Caco-2 (cell line): ENCODE measurements at regions of chr17 and their contacts with region 1.

Region 1: DNA sequence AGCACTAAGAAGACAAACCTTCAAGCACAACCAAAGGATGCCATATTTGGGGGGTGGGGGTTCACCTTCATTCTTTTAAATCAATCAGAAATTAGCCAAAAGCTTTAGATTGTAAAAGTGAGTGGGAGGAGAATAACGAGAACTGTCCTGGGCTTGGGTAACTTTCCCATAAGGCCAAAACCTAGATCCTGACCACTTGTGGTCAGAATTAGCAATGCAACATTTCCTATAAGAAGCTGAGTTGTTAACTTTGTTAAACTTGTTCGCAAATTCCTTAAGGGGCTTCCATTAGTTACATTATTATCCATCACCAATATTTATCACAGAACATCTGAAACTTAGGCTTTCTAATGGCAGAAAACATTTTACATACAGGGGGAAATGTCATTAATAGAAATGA is 25.1 kb downstream of the STAT5B start:
- DNase-seq: peak in 1 of 2 experiments; percentile 15
- H3K4me3 ChIP-seq: no peak overlapping the region
- H3K4me3 Mint-ChIP-seq: no peak overlapping the region
- H3K27ac Mint-ChIP-seq: no peak overlapping the region
- H3K4me1 ChIP-seq: peaks cover 18% of the 10 kb centered on the region
- H3K4me1 Mint-ChIP-seq: peaks cover 16% of the 10 kb centered on the region
- H3K27me3 ChIP-seq: no peaks in the 10 kb centered on the region
- H3K27me3 Mint-ChIP-seq: no peaks in the 10 kb centered on the region
- CTCF ChIP-seq: peak in 1 of 2 experiments; percentile 44

Region 2: GRCh38 chr17:42221937-42222745 is 29.0 kb before region 1 on chr17:
- CTCF ChIA-PET with region 1: interaction called, 13 read pairs
- POLR2A ChIA-PET with region 1: interaction called, 3 read pairs
- intact Hi-C with region 1: no loop called
- DNase-seq: peak in 1 of 2 experiments; percentile 44
- H3K4me3 ChIP-seq: no peak overlapping the region
- H3K4me3 Mint-ChIP-seq: no peak overlapping the region
- H3K27ac Mint-ChIP-seq: no peak overlapping the region
- H3K4me1 ChIP-seq: no peaks in the 10 kb centered on the region
- H3K4me1 Mint-ChIP-seq: no peaks in the 10 kb centered on the region
- H3K27me3 ChIP-seq: no peaks in the 10 kb centered on the region
- H3K27me3 Mint-ChIP-seq: no peaks in the 10 kb centered on the region
- CTCF ChIP-seq: peak; percentile 59 to 72

Region 3: GRCh38 chr17:42305543-42306384 is 54.6 kb after region 1 on chr17:
- CTCF ChIA-PET with region 1: interaction called, 10 read pairs
- POLR2A ChIA-PET with region 1: no interaction called
- intact Hi-C with region 1: no loop called
- DNase-seq: no peak
- H3K4me3 ChIP-seq: no peak overlapping the region
- H3K4me3 Mint-ChIP-seq: no peak overlapping the region
- H3K27ac Mint-ChIP-seq: no peak overlapping the region
- H3K4me1 ChIP-seq: no peaks in the 10 kb centered on the region
- H3K4me1 Mint-ChIP-seq: no peaks in the 10 kb centered on the region
- H3K27me3 ChIP-seq: no peaks in the 10 kb centered on the region
- H3K27me3 Mint-ChIP-seq: no peaks in the 10 kb centered on the region
- CTCF ChIP-seq: peak in 1 of 2 experiments; percentile 7